AG04450 (cell line): ENCODE measurements at regions of chr16 and their contacts with region 1.

Region 1: DNA sequence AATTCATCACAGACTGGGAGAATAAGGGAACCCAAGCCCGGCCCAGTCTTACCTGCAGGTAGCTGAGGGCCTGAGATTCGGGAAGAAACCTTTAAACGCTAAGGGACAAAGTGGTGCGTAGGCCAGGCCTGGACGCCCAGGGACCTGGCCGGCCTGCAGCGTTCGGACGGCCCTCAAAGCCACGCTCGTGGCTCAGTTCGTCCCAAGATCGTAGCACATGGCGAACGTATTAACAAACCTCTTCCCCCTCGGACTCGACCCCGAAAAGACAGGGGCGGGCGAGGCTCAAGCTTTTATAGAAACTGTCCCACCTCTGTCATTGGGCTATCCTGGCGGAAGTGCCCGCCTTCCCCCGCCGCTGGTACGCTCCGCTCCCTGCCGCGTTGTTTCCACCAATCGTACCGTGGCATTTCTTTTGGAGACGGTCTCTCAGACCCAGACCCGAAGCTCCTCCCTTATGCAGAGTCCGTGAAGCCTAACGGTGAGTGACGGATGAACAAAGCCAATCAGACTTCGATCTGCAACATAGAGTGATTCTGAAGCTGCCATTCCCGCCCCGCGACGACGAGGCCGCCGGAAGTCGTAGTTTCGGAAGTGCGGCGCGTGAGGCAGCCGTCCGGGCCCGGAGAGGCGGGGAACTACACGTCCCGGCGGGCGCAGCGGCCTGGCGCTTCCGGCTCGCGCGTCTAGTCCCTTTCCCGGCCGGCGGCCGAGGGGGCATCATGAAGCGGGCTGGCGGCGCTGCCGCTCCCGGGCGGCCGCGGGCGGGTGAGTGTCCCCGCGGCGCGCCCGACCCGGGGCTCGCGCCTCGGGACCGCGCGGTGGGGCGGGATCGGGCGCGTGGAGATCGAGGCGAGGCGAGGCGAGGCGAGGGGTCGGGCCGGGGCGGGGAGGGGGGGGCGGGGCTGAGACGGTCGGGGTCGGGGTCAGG is at the start of gene TRAF7:
- DNase-seq: peak; percentile 100
- H3K4me3 ChIP-seq: peak within 1 kb of the TSS; percentile 99
- H3K27ac ChIP-seq: peak within 1 kb of the TSS; percentile 73
- H3K27me3 ChIP-seq: no peaks in the 10 kb centered on the region
- CTCF ChIP-seq: no peak
- polyA plus RNA-seq, gene TRAF7: 35.2 and 49.3 TPM in 2 replicates

Region 2: GRCh38 chr16:2003827-2004641 is 151.3 kb before region 1 on chr16:
- CTCF ChIA-PET with region 1: interaction called, 4 read pairs
- POLR2A ChIA-PET with region 1: interaction called, 13 read pairs
- DNase-seq: peak; percentile 51
- H3K4me3 ChIP-seq: 0 out of 2 replicates have a peak overlapping the region, but pooled peaks have one; percentile 13
- H3K27ac ChIP-seq: no peak overlapping the region
- H3K27me3 ChIP-seq: no peaks in the 10 kb centered on the region
- CTCF ChIP-seq: peak; percentile 94

Region 3: GRCh38 chr16:2039274-2040031 is 115.9 kb before region 1 on chr16:
- CTCF ChIA-PET with region 1: no interaction called
- POLR2A ChIA-PET with region 1: interaction called, 11 read pairs
- DNase-seq: peak; percentile 81
- H3K4me3 ChIP-seq: no peak overlapping the region
- H3K27ac ChIP-seq: peak overlapping the region; percentile 91
- H3K27me3 ChIP-seq: no peaks in the 10 kb centered on the region
- CTCF ChIP-seq: no peak

Region 4: DNA sequence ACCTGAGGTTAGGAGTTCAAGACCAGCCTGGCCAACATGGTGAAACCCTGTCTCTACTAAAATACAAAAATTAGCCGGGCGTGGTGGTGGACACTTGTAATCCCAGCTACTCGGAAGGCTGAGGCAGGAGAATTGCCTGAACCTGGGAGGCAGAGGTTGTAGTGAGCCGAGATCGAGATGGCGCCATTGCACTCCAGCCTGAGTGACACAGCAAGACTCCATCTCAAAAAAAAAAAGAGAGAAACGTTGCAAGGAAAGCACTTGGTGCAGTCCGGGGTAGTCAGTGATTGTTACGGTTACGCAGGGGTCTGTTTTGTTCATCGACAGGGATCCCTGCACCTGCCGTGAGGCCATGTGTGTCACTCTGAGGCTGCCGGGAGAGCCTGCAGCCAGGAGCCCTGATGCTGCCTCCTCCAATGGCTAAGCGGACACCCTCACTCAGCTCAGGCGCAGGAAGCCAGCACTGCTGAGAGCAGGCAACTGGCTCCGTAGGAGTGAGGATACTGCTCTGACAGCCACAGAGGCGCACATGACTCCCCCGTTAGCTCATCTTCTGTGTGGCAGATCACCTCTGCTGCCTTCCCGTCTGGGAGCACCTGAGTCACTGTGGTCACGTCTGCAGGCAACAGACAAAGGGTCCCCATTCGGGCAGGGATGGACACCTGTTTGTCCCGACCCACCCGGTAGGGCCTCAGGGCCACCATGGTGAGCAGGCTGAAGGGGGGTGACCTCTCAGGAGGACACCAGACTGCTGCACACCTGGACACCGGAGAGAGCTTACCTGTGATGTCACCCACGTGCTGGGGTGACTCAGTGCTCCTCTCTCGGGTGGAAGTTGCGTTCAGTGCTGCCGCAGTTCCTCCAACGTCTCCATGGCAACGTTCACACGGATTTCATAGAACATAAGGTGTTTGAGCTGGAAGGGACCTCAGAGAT is 12.1 kb before region 1 on chr16:
- CTCF ChIA-PET with region 1: interaction called, 21 read pairs
- POLR2A ChIA-PET with region 1: interaction called, 34 read pairs
- DNase-seq: no peak
- H3K4me3 ChIP-seq: no peak overlapping the region
- H3K27ac ChIP-seq: no peak overlapping the region
- H3K27me3 ChIP-seq: no peaks in the 10 kb centered on the region
- CTCF ChIP-seq: no peak

Region 5: GRCh38 chr16:2194852-2195321 is 39.5 kb after region 1 on chr16:
- CTCF ChIA-PET with region 1: no interaction called
- POLR2A ChIA-PET with region 1: interaction called, 16 read pairs
- DNase-seq: no peak
- H3K4me3 ChIP-seq: no peak overlapping the region
- H3K27ac ChIP-seq: no peak overlapping the region
- H3K27me3 ChIP-seq: peaks cover 58% of the 10 kb centered on the region
- CTCF ChIP-seq: peak; percentile 41

Region 6: DNA sequence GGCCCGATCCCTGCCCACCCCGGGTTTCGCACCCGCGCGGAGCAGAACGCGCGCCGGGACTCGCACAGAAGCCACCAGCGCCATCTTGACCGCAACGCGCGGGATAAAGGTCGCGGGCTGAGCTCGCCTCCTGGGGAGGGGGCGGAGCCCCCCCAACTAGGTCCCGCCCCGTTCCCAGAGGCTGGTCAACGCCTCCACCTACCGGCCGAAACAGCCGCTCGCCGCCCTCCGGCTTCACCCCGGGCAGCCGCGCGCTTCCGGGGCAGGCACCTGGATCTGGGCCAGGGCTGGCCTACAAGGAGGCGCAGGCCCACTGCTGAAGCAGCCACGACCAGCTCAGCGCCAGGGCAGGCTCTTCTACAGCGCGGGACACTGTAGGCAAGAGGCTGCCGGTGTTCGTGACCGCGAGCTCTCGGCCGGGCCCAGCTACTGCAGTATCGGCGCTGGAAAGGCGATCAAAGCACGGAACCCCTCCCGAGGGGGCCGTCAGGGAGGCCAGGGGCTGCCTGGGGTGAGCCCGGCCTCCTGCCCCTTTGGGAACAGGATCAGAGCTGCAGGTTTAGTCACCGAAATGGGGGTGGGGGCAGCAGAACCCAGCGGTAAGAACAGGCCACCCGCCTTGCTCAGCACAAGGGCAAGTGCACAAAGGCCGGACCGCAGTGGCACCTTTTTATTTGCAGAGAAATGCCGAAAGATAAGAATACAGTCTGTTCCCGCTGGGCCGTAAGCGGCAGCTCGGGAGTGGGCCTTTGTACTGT is 96.3 kb after region 1 on chr16 and contains the start of gene ECI1:
- CTCF ChIA-PET with region 1: no interaction called
- POLR2A ChIA-PET with region 1: interaction called, 26 read pairs
- DNase-seq: peak; percentile 85
- H3K4me3 ChIP-seq: peak within 1 kb of the TSS; percentile 73
- H3K27ac ChIP-seq: peak within 1 kb of the TSS; percentile 73
- H3K27me3 ChIP-seq: no peaks in the 10 kb centered on the region
- CTCF ChIP-seq: peak; percentile 64
- polyA plus RNA-seq, gene ECI1: 24.9 and 32.4 TPM in 2 replicates

Region 7: DNA sequence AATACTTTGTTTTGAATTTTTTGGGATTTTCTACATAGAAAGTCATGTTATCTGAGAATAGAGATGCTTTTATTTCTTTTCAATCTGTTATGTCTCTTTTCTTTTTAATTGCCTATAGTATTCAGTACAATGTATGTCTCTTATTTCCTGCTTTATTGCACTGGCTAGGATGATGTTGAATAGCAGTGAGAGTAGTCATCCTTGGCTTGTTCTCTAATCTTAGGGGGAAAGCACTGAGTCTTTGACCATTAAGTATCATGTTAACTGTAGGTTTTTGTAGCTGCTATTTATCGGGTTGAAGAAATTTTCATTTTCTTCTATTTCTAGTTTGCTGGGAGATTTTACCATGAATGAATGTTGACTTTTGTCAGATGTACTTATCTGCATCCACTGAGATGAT is 195.1 kb after region 1 on chr16:
- CTCF ChIA-PET with region 1: no interaction called
- POLR2A ChIA-PET with region 1: no interaction called
- DNase-seq: no peak
- H3K4me3 ChIP-seq: no peak overlapping the region
- H3K27ac ChIP-seq: no peak overlapping the region
- H3K27me3 ChIP-seq: peaks cover 6% of the 10 kb centered on the region
- CTCF ChIP-seq: no peak